Activated T-helper 1 cell treated with anti-CD3 and anti-CD28 coated beads, Interleukin-12 subunit alpha, Interleukin-12 subunit beta, Interleukin-2, Interleukin-4 antibody, amounts not matched to agents 30 ng/mL and 10 ng/mL and 1 ng/mL, durations not matched to agents 14 hours and 24 hours and 36 hours (primary cell): ENCODE measurements at regions of chr3 and their contacts with region 1.

Region 1: DNA sequence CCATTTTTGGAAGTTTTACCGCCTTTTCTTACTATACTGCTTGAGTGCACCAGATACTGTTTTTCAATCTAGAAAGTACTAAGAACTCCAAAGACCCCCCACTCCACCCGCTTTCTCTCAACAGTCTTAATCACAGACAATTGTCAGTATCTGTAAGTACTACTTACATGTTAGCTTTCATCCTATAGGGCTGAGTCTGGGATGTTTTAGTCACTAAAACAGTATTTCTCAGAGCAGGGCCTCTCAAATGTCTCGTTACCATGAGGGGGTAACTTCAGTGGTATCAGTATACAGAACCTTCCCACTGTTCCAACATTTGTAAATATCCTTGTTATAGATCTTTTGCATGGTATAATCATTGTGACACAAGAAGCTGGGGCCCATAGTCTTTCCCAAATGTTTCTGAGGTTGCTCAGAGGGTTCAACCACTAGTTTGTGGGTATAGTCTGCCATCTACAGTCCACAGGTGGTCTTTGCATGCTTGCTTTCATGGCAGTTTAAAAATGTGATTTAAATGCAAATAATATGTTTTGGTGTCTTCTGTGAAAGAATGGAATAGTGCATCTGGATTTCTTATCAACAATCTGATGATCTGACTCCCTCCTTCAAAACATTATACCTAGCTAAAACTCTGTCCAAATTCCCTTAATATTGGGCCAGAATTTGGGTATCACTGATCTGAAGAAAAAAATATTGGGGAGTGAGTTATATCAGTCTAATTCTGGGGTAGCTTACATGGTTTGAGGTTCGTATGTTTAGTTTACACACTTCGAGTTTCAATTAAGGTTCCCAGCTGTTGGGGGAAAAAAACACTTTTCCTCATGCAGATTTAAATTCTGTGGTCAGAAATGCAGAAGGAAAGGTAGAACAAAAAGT is 18.0 kb upstream of the DNAJC13 start:
- DNase-seq: no peak
- H3K4me3 Mint-ChIP-seq: no peak overlapping the region
- H3K27ac Mint-ChIP-seq: no peak overlapping the region
- H3K4me1 Mint-ChIP-seq: no peaks in the 10 kb centered on the region
- H3K27me3 Mint-ChIP-seq: peaks cover 18% of the 10 kb centered on the region

Region 2: DNA sequence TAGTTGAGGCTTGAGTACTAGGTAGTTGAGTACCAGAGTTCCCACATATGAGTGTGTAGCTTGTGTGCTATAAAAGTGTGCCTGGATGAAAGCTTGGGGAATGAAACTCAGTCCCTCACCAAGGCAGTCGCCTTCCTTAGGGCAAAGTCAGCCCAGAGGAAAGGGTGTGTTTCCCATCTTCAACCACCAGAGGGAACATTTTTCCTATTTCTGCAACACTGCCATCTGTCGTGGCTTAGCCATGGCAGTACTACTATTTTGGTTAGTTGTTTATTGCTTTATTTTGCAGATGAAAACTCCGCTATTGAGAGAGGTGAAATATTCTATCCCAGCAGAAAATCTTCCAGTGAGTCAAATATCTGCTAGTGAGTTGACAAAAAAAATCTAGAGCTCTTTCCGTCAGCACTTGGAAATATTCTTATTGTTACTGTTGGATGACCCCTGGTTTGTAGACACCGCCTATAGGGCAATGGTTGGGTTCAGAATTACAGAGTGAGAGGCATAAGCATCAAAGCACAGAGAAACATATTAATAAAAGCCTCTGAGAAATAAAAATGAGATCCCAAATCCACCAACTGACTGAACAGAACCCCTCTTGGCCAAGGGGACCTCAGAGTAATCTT is 604.4 kb before region 1 on chr3:
- intact Hi-C with region 1: loop called (anchors 5 kb)
- DNase-seq: peak; percentile 8
- H3K4me3 Mint-ChIP-seq: no peak overlapping the region
- H3K27ac Mint-ChIP-seq: no peak overlapping the region
- H3K4me1 Mint-ChIP-seq: peaks cover 10% of the 10 kb centered on the region
- H3K27me3 Mint-ChIP-seq: no peaks in the 10 kb centered on the region